ENCODE measurements at regions of chr17 and their contacts with region 1.

Region 1: GRCh38 chr17:75319904-75320691 is 30.9 kb upstream of the SLC25A19 start:
- DNase-seq: no peak
- ATAC-seq: no peak
- H3K4me3 ChIP-seq: no peak overlapping the region
- H3K27ac ChIP-seq: no peak overlapping the region
- H3K4me1 ChIP-seq: no peaks in the 10 kb centered on the region
- H3K27me3 ChIP-seq: no peaks in the 10 kb centered on the region
- CTCF ChIP-seq: no peak

Region 2: GRCh38 chr17:75405365-75406221 is 85.5 kb after region 1 on chr17 and contains the start of gene GRB2:
- intact Hi-C with region 1: loop called in 2 of 3 experiments (anchors 5 kb)
- DNase-seq: peak; percentile 98 to 100 (median 99)
- ATAC-seq: peak; percentile 91 to 96 (median 96)
- H3K4me3 ChIP-seq: peak within 1 kb of the TSS; percentile 96 to 100 (median 98)
- H3K27ac ChIP-seq: peak within 1 kb of the TSS; percentile 83 to 94 (median 90)
- H3K4me1 ChIP-seq: peaks cover 7 to 17% (median 14%) of the 10 kb centered on the region in 3 donors
- H3K27me3 ChIP-seq: no peaks in the 10 kb centered on the region
- CTCF ChIP-seq: no peak
- total RNA-seq, gene GRB2: 25.2 to 64.7 (median 36.5) TPM

Region 3: GRCh38 chr17:75412455-75413317 is 92.6 kb after region 1 on chr17:
- intact Hi-C with region 1: loop called in 2 of 3 experiments (anchors 5 kb)
- DNase-seq: peak in 3 of 6 donors; percentile 37 to 65 (median 45)
- ATAC-seq: peak; percentile 77 to 94 (median 88)
- H3K4me3 ChIP-seq: peak overlapping the region in 1 of 4 donors; percentile 13
- H3K27ac ChIP-seq: no peak overlapping the region
- H3K4me1 ChIP-seq: no peaks in the 10 kb centered on the region
- H3K27me3 ChIP-seq: no peaks in the 10 kb centered on the region
- CTCF ChIP-seq: peak; percentile 23 to 67 (median 56)